Naive thymus-derived CD4-positive, alpha-beta T cell (primary cell): ENCODE measurements at regions of chr19 and their contacts with region 1.

Region 1: GRCh38 chr19:58408152-58409009 is at the start of gene ZNF584:
- DNase-seq: peak; percentile 86 to 94 (median 92)
- ATAC-seq: peak; percentile 98
- H3K4me3 ChIP-seq: peak within 1 kb of the TSS; percentile 96
- H3K4me3 Mint-ChIP-seq: peak within 1 kb of the TSS; percentile 82 to 98 (median 95)
- H3K27ac ChIP-seq: peak within 1 kb of the TSS; percentile 87
- H3K27ac Mint-ChIP-seq: peak within 1 kb of the TSS; percentile 83 to 95 (median 93)
- H3K4me1 ChIP-seq: peaks cover 12 to 15% of the 10 kb centered on the region in 2 donors
- H3K4me1 Mint-ChIP-seq: peaks cover 5 to 45% (median 34%) of the 10 kb centered on the region in 7 donors
- H3K27me3 ChIP-seq: no peaks in the 10 kb centered on the region
- H3K27me3 Mint-ChIP-seq: no peaks in the 10 kb centered on the region
- total RNA-seq, gene ZNF584: 4.2 to 12.1 (median 8.8) TPM

Region 2: DNA sequence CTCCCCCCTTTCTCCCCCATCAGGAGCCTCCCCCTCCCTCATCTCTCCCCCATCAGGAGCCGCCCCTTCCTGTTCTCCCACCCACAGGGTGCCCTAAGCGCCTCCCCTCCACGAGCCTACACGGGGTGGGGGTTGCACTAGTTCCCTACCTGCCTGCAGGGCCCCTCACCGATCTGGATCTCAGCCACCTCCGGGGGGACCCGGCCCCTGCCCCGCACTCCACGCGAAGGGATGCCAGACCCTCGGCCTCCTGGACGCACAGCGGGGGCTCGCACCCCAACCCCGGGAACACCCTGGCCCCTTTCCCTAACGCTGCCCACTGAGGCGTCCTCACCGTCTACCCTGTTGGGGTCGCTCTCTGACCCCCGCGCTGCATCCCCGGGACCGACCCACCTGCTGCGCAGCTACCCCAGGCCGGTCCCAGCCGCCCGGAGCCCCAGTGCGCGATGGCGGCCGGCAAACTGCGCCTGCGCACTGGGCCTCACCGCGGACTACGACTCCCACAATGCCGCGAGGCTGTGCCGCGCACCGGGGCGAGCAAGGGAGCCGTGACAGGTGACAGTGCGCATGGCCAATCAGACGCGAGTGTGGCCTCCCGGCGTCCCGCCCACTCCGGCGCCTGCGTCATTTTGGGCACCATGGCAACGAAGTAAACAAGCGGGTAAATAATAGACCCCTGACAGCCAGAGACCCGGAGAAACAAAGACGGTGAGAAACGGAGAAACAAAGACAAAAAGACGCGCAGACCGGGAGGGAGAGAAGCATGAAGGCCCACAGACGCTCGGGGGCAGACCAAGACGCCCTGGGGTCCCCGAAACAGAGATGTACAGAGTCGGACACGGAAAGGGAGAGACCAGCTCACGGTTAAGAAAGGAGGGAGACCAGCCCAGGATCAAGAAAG is 310.4 kb before region 1 on chr19 and contains the start of gene ZSCAN18:
- CTCF ChIA-PET with region 1: no interaction called
- POLR2A ChIA-PET with region 1: no interaction called
- intact Hi-C with region 1: loop called in 1 of 2 experiments (anchors 1 kb)
- DNase-seq: peak; percentile 77 to 100 (median 99)
- ATAC-seq: peak; percentile 97
- H3K4me3 ChIP-seq: peak within 1 kb of the TSS; percentile 86
- H3K4me3 Mint-ChIP-seq: peak within 1 kb of the TSS; percentile 83 to 100 (median 91)
- H3K27ac ChIP-seq: peak within 1 kb of the TSS; percentile 100
- H3K27ac Mint-ChIP-seq: peak within 1 kb of the TSS; percentile 98 to 100 (median 100)
- H3K4me1 ChIP-seq: peaks cover 0 to 11% of the 10 kb centered on the region in 2 donors
- H3K4me1 Mint-ChIP-seq: peaks cover 8 to 18% (median 15%) of the 10 kb centered on the region in 7 donors
- H3K27me3 ChIP-seq: no peaks in the 10 kb centered on the region
- H3K27me3 Mint-ChIP-seq: no peaks in the 10 kb centered on the region
- total RNA-seq, gene ZSCAN18: 8.2 to 100 (median 78.1) TPM

Region 3: GRCh38 chr19:58346961-58347931 is 61.1 kb before region 1 on chr19:
- CTCF ChIA-PET with region 1: no interaction called
- POLR2A ChIA-PET with region 1: no interaction called
- intact Hi-C with region 1: loop called in 1 of 2 experiments (anchors 5 kb)
- DNase-seq: peak; percentile 50 to 78 (median 68)
- ATAC-seq: peak; percentile 98
- H3K4me3 ChIP-seq: peak overlapping the region; percentile 77
- H3K4me3 Mint-ChIP-seq: peak overlapping the region; percentile 86 to 97 (median 92)
- H3K27ac ChIP-seq: peak overlapping the region; percentile 73
- H3K27ac Mint-ChIP-seq: peak overlapping the region; percentile 71 to 93 (median 85)
- H3K4me1 ChIP-seq: peaks cover 0 to 7% of the 10 kb centered on the region in 2 donors
- H3K4me1 Mint-ChIP-seq: peaks cover 23 to 36% (median 29%) of the 10 kb centered on the region in 7 donors
- H3K27me3 ChIP-seq: no peaks in the 10 kb centered on the region
- H3K27me3 Mint-ChIP-seq: peaks cover 0 to 5% (median 0%) of the 10 kb centered on the region in 5 donors

Region 4: GRCh38 chr19:58372311-58373133 is 35.9 kb before region 1 on chr19:
- CTCF ChIA-PET with region 1: no interaction called
- POLR2A ChIA-PET with region 1: no interaction called
- intact Hi-C with region 1: no loop called
- DNase-seq: peak in 1 of 9 donors; percentile 3
- ATAC-seq: no peak
- H3K4me3 ChIP-seq: no peak overlapping the region
- H3K4me3 Mint-ChIP-seq: no peak overlapping the region
- H3K27ac ChIP-seq: no peak overlapping the region
- H3K27ac Mint-ChIP-seq: no peak overlapping the region
- H3K4me1 ChIP-seq: no peaks in the 10 kb centered on the region
- H3K4me1 Mint-ChIP-seq: peaks cover 0 to 2% (median 0%) of the 10 kb centered on the region in 7 donors
- H3K27me3 ChIP-seq: no peaks in the 10 kb centered on the region
- H3K27me3 Mint-ChIP-seq: no peaks in the 10 kb centered on the region

Region 5: GRCh38 chr19:58451358-58452101 is 43.1 kb after region 1 on chr19 and contains the start of gene ZNF324B:
- CTCF ChIA-PET with region 1: no interaction called
- POLR2A ChIA-PET with region 1: interaction called, 4 read pairs
- intact Hi-C with region 1: loop called (anchors 1 kb)
- DNase-seq: peak; percentile 90 to 97 (median 94)
- ATAC-seq: peak; percentile 99
- H3K4me3 ChIP-seq: peak within 1 kb of the TSS; percentile 63
- H3K4me3 Mint-ChIP-seq: peak within 1 kb of the TSS; percentile 85 to 98 (median 88)
- H3K27ac ChIP-seq: peak within 1 kb of the TSS; percentile 81
- H3K27ac Mint-ChIP-seq: peak within 1 kb of the TSS in 8 of 9 donors; percentile 2 to 90 (median 71)
- H3K4me1 ChIP-seq: peaks cover 0 to 4% of the 10 kb centered on the region in 2 donors
- H3K4me1 Mint-ChIP-seq: peaks cover 12 to 23% (median 19%) of the 10 kb centered on the region in 7 donors
- H3K27me3 ChIP-seq: no peaks in the 10 kb centered on the region
- H3K27me3 Mint-ChIP-seq: peaks cover 8 to 26% (median 17%) of the 10 kb centered on the region in 5 donors
- total RNA-seq, gene ZNF324B: 9.1 to 13.9 (median 11.8) TPM

Region 6: GRCh38 chr19:58499021-58499927 is 90.9 kb after region 1 on chr19:
- CTCF ChIA-PET with region 1: no interaction called
- POLR2A ChIA-PET with region 1: no interaction called
- intact Hi-C with region 1: loop called in 1 of 2 experiments (anchors 2 kb)
- DNase-seq: peak; percentile 76 to 96 (median 87)
- ATAC-seq: peak; percentile 93
- H3K4me3 ChIP-seq: peak overlapping the region; percentile 66
- H3K4me3 Mint-ChIP-seq: peak overlapping the region; percentile 88 to 98 (median 94)
- H3K27ac ChIP-seq: peak overlapping the region; percentile 72
- H3K27ac Mint-ChIP-seq: peak overlapping the region; percentile 90 to 97 (median 95)
- H3K4me1 ChIP-seq: peaks cover 12 to 15% of the 10 kb centered on the region in 2 donors
- H3K4me1 Mint-ChIP-seq: peaks cover 8 to 32% (median 21%) of the 10 kb centered on the region in 7 donors
- H3K27me3 ChIP-seq: no peaks in the 10 kb centered on the region
- H3K27me3 Mint-ChIP-seq: no peaks in the 10 kb centered on the region

Region 7: GRCh38 chr19:58538257-58539168 is 130.1 kb after region 1 on chr19:
- CTCF ChIA-PET with region 1: no interaction called
- POLR2A ChIA-PET with region 1: no interaction called
- intact Hi-C with region 1: no loop called
- DNase-seq: peak in 4 of 9 donors; percentile 38 to 44 (median 42)
- ATAC-seq: peak; percentile 77
- H3K4me3 ChIP-seq: peak overlapping the region; percentile 53
- H3K4me3 Mint-ChIP-seq: peak overlapping the region; percentile 62 to 79 (median 72)
- H3K27ac ChIP-seq: peak overlapping the region; percentile 12
- H3K27ac Mint-ChIP-seq: peak overlapping the region in 8 of 9 donors; percentile 43 to 84 (median 71)
- H3K4me1 ChIP-seq: peaks cover 3 to 5% of the 10 kb centered on the region in 2 donors
- H3K4me1 Mint-ChIP-seq: peaks cover 6 to 19% (median 11%) of the 10 kb centered on the region in 7 donors
- H3K27me3 ChIP-seq: no peaks in the 10 kb centered on the region
- H3K27me3 Mint-ChIP-seq: peaks cover 0 to 30% (median 0%) of the 10 kb centered on the region in 5 donors